ENCODE measurements at regions of chr1 and their contacts with region 1.

Region 1: DNA sequence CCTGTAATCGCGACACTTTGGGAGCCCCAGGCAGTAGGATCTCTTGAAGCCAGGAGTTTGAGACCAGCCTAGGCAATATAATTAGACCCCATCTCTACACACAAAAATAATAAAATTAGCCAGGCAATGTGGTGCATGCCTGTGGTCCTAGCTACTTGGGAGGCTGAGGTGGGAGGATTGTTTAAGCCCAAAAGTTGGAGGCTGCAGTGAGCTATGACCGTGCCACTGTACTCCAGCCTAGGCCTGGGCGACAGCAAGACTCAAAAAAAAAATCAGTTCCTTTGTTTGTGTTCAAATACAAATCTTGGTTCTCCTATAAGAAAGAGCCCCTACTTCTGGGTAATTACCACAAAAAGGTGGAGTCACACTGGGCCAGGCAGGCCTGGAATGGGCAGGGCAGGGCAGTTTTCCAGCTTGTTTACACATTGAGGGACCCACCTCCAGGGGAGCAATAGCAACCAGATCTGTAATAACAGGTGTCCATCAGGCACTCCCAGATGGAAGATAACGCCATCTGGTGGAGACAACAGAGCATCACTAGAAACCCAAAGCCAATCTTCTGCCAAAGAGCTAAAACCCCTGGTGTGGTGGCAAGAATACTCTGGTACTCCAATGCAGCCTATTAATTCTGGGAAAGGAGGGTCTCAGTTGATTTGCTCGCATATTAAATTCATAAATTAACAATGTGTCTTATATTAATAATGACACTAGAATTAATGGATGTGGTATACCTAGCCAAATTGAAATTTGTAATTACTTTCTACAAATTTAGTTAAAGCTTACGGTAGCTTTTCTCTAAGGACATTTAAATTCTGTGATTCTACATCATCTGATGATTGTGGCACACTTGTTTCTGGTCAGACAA is 13.2 kb downstream of the PPP1R15B start:
- DNase-seq: peak; percentile 75
- ATAC-seq: peak; percentile 84
- H3K4me3 Mint-ChIP-seq: no peak overlapping the region
- H3K27ac Mint-ChIP-seq: no peak overlapping the region
- H3K4me1 Mint-ChIP-seq: peaks cover 2% of the 10 kb centered on the region
- H3K27me3 Mint-ChIP-seq: no peaks in the 10 kb centered on the region

Region 2: GRCh38 chr1:204162231-204163074 is 236.0 kb before region 1 on chr1:
- CTCF ChIA-PET with region 1: interaction called, 14 read pairs
- DNase-seq: peak; percentile 80
- ATAC-seq: peak; percentile 88
- H3K4me3 Mint-ChIP-seq: no peak overlapping the region
- H3K27ac Mint-ChIP-seq: no peak overlapping the region
- H3K4me1 Mint-ChIP-seq: no peaks in the 10 kb centered on the region
- H3K27me3 Mint-ChIP-seq: peaks cover 3% of the 10 kb centered on the region

Region 3: GRCh38 chr1:204377795-204378608 is 20.4 kb before region 1 on chr1:
- CTCF ChIA-PET with region 1: interaction called, 41 read pairs
- DNase-seq: peak; percentile 55
- ATAC-seq: peak; percentile 74
- H3K4me3 Mint-ChIP-seq: peak overlapping the region; percentile 73
- H3K27ac Mint-ChIP-seq: no peak overlapping the region
- H3K4me1 Mint-ChIP-seq: peaks cover 11% of the 10 kb centered on the region
- H3K27me3 Mint-ChIP-seq: peaks cover 44% of the 10 kb centered on the region

Region 4: GRCh38 chr1:204384994-204385352 is 13.5 kb before region 1 on chr1:
- CTCF ChIA-PET with region 1: interaction called, 41 read pairs
- DNase-seq: no peak
- ATAC-seq: no peak
- H3K4me3 Mint-ChIP-seq: no peak overlapping the region
- H3K27ac Mint-ChIP-seq: no peak overlapping the region
- H3K4me1 Mint-ChIP-seq: peaks cover 4% of the 10 kb centered on the region
- H3K27me3 Mint-ChIP-seq: peaks cover 12% of the 10 kb centered on the region

Region 5: GRCh38 chr1:204411451-204412204 is 13.2 kb after region 1 on chr1 and contains the start of gene PPP1R15B:
- CTCF ChIA-PET with region 1: interaction called, 66 read pairs
- DNase-seq: peak; percentile 98
- ATAC-seq: peak; percentile 91
- H3K4me3 Mint-ChIP-seq: peak within 1 kb of the TSS; percentile 92
- H3K27ac Mint-ChIP-seq: peak within 1 kb of the TSS; percentile 100
- H3K4me1 Mint-ChIP-seq: peaks cover 16% of the 10 kb centered on the region
- H3K27me3 Mint-ChIP-seq: no peaks in the 10 kb centered on the region
- total RNA-seq, gene PPP1R15B: 75.5 to 81.7 TPM

Region 6: GRCh38 chr1:204506961-204507387 is 108.5 kb after region 1 on chr1:
- CTCF ChIA-PET with region 1: interaction called, 22 read pairs
- DNase-seq: peak; percentile 93
- ATAC-seq: peak; percentile 79
- H3K4me3 Mint-ChIP-seq: peak overlapping the region; percentile 85
- H3K27ac Mint-ChIP-seq: peak overlapping the region; percentile 100
- H3K4me1 Mint-ChIP-seq: peaks cover 31% of the 10 kb centered on the region
- H3K27me3 Mint-ChIP-seq: no peaks in the 10 kb centered on the region

Region 7: DNA sequence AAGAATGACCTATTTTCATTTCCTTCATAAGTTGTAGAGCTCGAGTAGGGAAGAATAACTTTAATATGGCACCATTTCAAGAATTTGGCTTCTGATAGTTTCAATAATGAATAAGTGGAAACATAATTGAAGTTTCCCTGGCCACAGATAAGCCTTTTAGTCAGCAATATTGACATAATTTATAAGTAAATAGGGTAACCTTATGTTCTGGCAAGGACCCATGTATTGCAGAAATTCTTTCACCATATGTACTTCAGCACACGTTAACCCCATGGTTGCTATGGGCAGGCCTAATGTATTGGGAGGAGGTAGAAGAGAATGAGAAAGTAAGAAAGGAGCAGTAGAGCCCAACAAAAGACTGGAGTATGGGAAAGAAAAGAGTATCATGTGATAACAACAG is 143.2 kb after region 1 on chr1:
- CTCF ChIA-PET with region 1: no interaction called
- DNase-seq: no peak
- ATAC-seq: no peak
- H3K4me3 Mint-ChIP-seq: no peak overlapping the region
- H3K27ac Mint-ChIP-seq: peak overlapping the region; percentile 27
- H3K4me1 Mint-ChIP-seq: peaks cover 48% of the 10 kb centered on the region
- H3K27me3 Mint-ChIP-seq: no peaks in the 10 kb centered on the region

Measured in activated CD8-positive, alpha-beta memory T cell treated with anti-CD3 and anti-CD28 coated beads, Interleukin-2, amount 10 ng/mL, durations not matched to agents 7 days and 5 days (primary cell).